ENCODE measurements at regions of chr4 and their contacts with region 1.

Region 1: DNA sequence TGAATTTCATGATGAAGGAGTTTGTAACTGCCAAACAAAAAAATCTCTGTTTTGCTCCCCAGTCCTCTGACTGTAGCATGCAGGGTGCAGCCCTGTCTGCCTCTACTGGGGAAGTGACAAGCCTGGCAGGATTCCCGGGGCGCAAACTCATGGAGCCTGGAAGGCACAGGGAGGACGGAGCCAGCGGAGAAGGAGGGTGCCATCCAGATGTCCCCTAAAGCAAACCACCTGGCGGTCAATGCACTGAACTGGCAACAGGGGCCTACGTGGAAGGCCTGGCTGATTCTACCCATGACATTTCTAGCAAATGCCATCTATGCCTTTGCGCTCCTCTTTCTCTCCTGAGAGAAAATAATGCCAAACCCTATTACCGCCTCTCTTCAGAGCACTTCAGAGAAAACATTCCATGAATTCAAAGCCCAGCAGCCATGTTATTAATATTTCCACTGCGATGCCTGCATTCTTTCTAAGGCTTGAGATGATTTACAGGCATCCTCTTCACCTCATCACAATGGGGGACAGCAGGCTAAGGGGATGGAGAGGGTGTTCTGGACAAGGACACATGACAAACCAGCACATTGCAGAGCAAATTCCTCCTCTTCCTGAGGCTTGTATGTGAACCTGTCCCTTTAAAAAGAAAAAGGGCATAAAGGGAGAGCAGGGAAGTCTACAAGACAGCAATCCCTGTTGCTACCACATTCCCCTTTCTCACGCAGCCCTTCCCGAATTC is 329.3 kb upstream of the NOCT start:
- DNase-seq: peak; percentile 48 to 84 (median 83)
- ATAC-seq: peak; percentile 68 to 75
- H3K4me3 ChIP-seq: no peak overlapping the region
- H3K27ac ChIP-seq: peak overlapping the region; percentile 82
- H3K4me1 ChIP-seq: no peaks in the 10 kb centered on the region
- H3K27me3 ChIP-seq: no peaks in the 10 kb centered on the region

Region 2: GRCh38 chr4:138864961-138865720 is 178.9 kb after region 1 on chr4:
- intact Hi-C with region 1: loop called in 2 of 4 experiments (anchors 5 to 10 kb)
- DNase-seq: peak in 1 of 3 donors; percentile 41
- ATAC-seq: no peak
- H3K4me3 ChIP-seq: no peak overlapping the region
- H3K27ac ChIP-seq: no peak overlapping the region
- H3K4me1 ChIP-seq: peaks cover 2% of the 10 kb centered on the region
- H3K27me3 ChIP-seq: no peaks in the 10 kb centered on the region

Region 3: GRCh38 chr4:139279760-139280620 is 593.7 kb after region 1 on chr4 and contains the start of gene MGARP:
- intact Hi-C with region 1: no loop called
- DNase-seq: peak; percentile 34 to 60 (median 57)
- ATAC-seq: peak; percentile 79 to 83
- H3K4me3 ChIP-seq: peak within 1 kb of the TSS; percentile 58
- H3K27ac ChIP-seq: no peak within 1 kb of the TSS
- H3K4me1 ChIP-seq: no peaks in the 10 kb centered on the region
- H3K27me3 ChIP-seq: no peaks in the 10 kb centered on the region
- total RNA-seq, gene MGARP: 1.3 to 3.3 (median 1.8) TPM